Activated T-helper 1 cell treated with anti-CD3 and anti-CD28 coated beads, Interleukin-12 subunit alpha, Interleukin-12 subunit beta, Interleukin-2, Interleukin-4 antibody, amounts not matched to agents 30 ng/mL and 10 ng/mL and 1 ng/mL, durations not matched to agents 14 hours and 24 hours and 36 hours (primary cell): ENCODE measurements at regions of chr2 and their contacts with region 1.

Region 1: GRCh38 chr2:153478334-153479261 is at the start of gene RPRM:
- DNase-seq: peak; percentile 50
- H3K4me3 Mint-ChIP-seq: peak within 1 kb of the TSS; percentile 74
- H3K27ac Mint-ChIP-seq: peak within 1 kb of the TSS; percentile 62
- H3K4me1 Mint-ChIP-seq: peaks cover 11% of the 10 kb centered on the region
- H3K27me3 Mint-ChIP-seq: peaks cover 60% of the 10 kb centered on the region
- total RNA-seq, gene RPRM: 0.20 TPM in 1 of 2 replicates, not detected in the other

Region 2: DNA sequence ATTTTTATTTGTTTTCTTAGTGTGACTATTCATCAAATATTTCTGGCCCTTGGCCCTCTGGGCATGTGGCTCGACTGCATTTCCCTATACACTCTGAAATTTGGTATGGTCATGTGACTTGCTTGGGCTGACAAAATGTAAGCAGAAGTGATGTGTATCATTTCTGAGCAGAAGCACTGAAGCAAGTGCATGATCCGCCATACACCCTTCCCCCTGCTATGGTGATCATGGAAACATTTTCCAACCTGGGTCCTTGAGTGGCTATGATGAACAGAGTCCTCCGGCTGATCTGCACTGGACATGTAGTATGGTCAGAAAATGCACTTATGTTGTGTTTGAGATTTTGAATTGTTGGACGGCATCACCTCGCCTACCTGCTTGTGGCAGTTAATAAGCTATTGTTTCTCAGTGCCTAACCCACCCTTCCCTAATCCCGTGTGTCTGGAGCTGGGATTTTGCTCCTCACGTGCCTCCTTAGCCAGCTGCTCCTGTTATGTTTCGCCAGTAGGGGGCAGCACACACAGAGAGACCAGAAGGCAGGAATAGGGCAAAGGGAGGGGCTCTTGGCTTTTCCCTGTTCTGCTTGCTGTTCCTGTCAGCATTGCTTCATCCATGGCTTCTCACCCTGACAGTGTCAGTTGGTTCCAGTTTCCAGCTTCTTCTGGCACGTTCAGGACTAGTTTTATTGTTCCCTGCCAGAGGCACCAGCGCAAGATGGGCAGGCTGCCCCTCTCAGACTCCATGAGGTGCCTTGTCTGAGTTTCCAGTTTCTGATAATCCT is 552.9 kb before region 1 on chr2:
- intact Hi-C with region 1: loop called (anchors 2 kb)
- DNase-seq: peak; percentile 8
- H3K4me3 Mint-ChIP-seq: no peak overlapping the region
- H3K27ac Mint-ChIP-seq: no peak overlapping the region
- H3K4me1 Mint-ChIP-seq: no peaks in the 10 kb centered on the region
- H3K27me3 Mint-ChIP-seq: no peaks in the 10 kb centered on the region

Region 3: DNA sequence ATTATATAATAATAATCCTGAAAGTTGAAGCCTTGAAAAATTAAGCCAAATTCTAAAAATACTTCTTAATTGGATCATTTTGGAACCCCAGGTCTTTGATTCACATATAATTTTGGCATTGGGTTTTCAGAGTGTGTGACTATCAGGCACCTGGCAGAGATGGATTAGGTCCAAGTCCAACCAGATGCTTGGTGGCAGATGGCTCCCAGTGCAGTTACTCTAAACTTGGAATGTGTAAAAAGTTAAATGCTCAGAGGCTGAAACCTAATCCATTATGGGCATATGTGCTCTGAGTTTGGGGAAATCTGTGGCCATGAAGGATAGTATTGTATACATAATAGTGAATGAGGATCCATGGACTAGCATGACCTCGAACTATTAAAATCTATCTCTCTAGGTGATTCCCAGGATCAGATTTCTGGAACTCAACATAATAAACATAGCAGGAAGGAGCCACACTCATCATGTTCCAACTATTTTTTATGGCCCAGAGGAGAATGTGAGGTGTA is 333.1 kb before region 1 on chr2:
- intact Hi-C with region 1: no loop called
- DNase-seq: no peak
- H3K4me3 Mint-ChIP-seq: no peak overlapping the region
- H3K27ac Mint-ChIP-seq: no peak overlapping the region
- H3K4me1 Mint-ChIP-seq: no peaks in the 10 kb centered on the region
- H3K27me3 Mint-ChIP-seq: no peaks in the 10 kb centered on the region

Region 4: GRCh38 chr2:153163058-153163457 is 315.5 kb before region 1 on chr2:
- intact Hi-C with region 1: loop called (anchors 5 kb)
- DNase-seq: no peak
- H3K4me3 Mint-ChIP-seq: no peak overlapping the region
- H3K27ac Mint-ChIP-seq: no peak overlapping the region
- H3K4me1 Mint-ChIP-seq: no peaks in the 10 kb centered on the region
- H3K27me3 Mint-ChIP-seq: no peaks in the 10 kb centered on the region

Region 5: DNA sequence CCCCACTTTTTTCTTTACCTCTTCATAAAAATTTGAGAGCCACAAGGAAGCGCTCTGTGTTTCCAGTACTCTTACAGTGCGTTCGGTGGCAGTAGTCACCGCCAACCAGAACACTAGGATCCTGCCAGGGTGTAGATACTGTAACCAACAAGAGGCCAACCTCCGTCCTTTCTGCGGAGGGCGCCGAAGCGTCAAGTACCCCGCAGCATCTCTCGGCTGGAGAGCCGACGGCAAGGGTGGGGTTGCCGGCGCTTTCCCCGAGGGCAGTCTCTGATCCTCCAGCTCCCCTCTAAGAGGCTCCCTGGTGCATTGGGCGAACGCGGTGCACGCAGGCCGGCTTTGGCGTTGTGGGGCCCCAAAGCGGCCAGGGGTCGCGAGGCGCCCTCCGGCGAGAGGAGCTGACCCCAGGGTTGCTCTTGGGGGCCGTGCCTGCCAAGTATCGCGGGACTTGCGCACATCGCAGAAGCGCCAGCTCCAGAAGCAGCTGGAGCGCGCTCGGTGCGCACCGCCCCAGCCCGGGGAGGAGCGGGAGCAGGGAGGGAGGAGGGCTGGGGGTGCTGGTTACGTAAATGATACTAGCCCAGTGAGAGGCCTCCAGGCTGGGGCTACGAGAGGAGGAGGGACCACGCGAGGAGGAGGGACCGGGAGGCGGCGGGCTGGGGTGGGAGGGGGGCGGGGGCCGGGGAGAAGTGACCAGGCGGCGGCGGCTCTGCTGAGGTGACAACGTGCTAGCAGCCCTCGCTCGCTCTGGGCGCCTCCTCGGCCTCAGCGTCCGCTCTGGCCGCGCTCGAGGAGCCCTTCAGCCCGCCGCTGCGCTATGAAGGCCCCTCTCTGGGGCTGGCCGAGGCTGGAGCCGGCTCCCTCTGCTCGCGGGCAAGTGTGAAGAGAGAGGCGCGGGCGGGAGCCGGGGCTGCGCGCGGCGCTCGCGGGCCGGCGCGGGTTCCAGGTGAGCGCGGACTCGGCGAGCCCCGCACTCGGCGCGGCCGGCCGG is 392.9 kb after region 1 on chr2 and contains the start of gene GALNT13:
- intact Hi-C with region 1: loop called (anchors 5 kb)
- DNase-seq: no peak
- H3K4me3 Mint-ChIP-seq: no peak within 1 kb of the TSS
- H3K27ac Mint-ChIP-seq: peak within 1 kb of the TSS; percentile 62
- H3K4me1 Mint-ChIP-seq: no peaks in the 10 kb centered on the region
- H3K27me3 Mint-ChIP-seq: peaks cover 14% of the 10 kb centered on the region
- total RNA-seq, gene GALNT13: not detected in 2 replicates